Upper lobe of right lung (tissue), 1 donor: ENCODE measurements at regions of chr3 and their contacts with region 1.

Region 1: DNA sequence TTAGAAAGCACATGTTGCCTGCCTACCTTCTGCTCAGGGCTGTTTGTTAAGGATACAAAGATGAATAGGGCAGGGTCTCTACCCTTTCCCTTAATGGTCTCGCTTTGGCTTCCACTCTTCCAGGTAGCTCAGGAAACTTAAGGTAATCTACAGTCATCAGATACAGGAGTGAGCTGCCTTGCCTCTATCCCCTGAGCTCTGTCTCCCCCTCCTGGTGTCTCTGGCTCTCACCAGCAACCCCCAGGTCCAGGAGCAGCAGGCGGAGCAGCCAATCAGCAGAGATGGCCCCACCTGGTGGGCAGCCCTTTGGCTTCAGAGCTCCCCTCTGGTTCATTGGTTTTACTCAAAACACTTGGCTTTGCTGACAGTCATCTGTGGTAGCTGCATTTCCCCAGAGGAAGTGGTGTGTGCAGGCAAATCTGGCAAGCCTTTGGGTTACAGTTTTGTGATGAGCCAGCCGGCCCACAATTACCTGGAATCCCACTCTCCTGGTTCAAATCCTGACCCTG is 8.5 kb upstream of the CX3CR1 start:
- DNase-seq: peak; percentile 84
- ATAC-seq: peak; percentile 98
- H3K4me3 ChIP-seq: no peak overlapping the region
- H3K27ac ChIP-seq: no peak overlapping the region
- H3K4me1 ChIP-seq: no peaks in the 10 kb centered on the region
- H3K27me3 ChIP-seq: no peaks in the 10 kb centered on the region
- CTCF ChIP-seq: peak; percentile 92

Region 2: GRCh38 chr3:39126532-39127071 is 161.8 kb before region 1 on chr3:
- intact Hi-C with region 1: loop called (anchors 10 kb)
- DNase-seq: no peak
- ATAC-seq: peak; percentile 75
- H3K4me3 ChIP-seq: no peak overlapping the region
- H3K27ac ChIP-seq: no peak overlapping the region
- H3K4me1 ChIP-seq: peaks cover 4% of the 10 kb centered on the region
- H3K27me3 ChIP-seq: no peaks in the 10 kb centered on the region
- CTCF ChIP-seq: peak; percentile 57

Region 3: DNA sequence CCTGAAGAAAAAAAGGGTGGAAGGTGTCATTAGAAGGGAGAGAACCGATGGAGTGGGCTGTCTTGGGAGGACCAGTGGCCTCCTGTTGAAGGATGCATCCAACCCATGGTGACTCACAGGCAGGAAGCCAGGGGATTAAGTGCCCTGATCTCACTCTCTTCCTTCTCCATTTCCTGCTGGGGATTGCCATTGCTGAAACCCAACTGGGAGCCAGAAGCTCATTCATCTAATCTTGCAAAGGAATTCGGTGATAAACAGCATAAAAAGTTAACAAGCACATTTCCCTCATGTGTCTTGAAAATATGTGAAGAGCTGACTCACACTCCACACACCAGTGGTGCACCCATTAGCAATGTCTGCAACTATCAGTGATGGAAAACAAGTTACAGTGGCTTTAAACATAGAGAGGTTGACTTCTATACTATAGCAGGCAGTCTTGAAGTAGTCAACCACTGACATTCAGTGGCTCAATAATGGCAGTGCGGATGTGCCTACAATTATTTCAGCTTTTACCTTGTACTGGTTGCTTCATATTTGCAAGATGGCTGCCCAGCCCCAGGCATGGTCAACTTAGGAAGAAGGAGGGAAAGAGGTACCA is 122.1 kb before region 1 on chr3:
- intact Hi-C with region 1: no loop called
- DNase-seq: no peak
- ATAC-seq: peak; percentile 49
- H3K4me3 ChIP-seq: no peak overlapping the region
- H3K27ac ChIP-seq: no peak overlapping the region
- H3K4me1 ChIP-seq: peaks cover 18% of the 10 kb centered on the region
- H3K27me3 ChIP-seq: no peaks in the 10 kb centered on the region
- CTCF ChIP-seq: no peak

Region 4: GRCh38 chr3:39208463-39209055 is 79.8 kb before region 1 on chr3:
- intact Hi-C with region 1: loop called (anchors 10 kb)
- DNase-seq: no peak
- ATAC-seq: peak; percentile 90
- H3K4me3 ChIP-seq: no peak overlapping the region
- H3K27ac ChIP-seq: no peak overlapping the region
- H3K4me1 ChIP-seq: peaks cover 3% of the 10 kb centered on the region
- H3K27me3 ChIP-seq: no peaks in the 10 kb centered on the region
- CTCF ChIP-seq: peak; percentile 62

Region 5: DNA sequence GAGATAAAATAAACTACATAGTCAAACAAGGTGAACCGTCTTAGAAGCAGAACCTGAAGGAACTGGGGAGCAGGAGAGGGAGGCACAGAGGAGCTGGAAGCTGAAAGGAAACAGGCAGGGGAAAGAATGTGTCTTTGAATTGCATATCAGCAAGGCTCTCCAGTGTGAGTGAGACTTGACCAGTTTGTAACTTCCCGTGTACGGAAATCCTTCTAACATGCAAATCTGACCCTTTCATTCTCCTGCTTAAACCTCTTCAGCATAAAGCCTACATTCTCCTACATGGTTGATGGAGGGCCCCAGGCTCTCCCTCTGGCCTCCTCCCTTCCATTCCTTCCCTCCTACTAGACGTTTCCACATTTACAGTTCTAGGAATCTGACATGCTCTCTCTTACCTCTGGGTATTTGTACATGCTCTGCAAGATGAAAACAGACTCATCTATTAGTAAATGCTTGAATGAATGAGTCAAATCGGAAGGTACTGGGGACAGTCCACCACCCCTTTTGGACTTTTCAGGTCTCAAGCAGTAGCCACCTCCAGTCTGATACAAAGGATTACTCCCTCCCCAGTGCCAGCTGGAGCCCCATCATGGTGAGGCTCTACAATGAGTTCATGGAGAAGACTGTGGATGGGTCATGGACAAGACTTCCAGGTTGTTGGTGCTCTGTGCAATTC is 88.7 kb after region 1 on chr3:
- intact Hi-C with region 1: no loop called
- DNase-seq: no peak
- ATAC-seq: no peak
- H3K4me3 ChIP-seq: no peak overlapping the region
- H3K27ac ChIP-seq: no peak overlapping the region
- H3K4me1 ChIP-seq: no peaks in the 10 kb centered on the region
- H3K27me3 ChIP-seq: no peaks in the 10 kb centered on the region
- CTCF ChIP-seq: no peak